Esophagus muscularis mucosa (tissue), 4 donors: ENCODE measurements at regions of chr20 and their contacts with region 1.

Region 1: DNA sequence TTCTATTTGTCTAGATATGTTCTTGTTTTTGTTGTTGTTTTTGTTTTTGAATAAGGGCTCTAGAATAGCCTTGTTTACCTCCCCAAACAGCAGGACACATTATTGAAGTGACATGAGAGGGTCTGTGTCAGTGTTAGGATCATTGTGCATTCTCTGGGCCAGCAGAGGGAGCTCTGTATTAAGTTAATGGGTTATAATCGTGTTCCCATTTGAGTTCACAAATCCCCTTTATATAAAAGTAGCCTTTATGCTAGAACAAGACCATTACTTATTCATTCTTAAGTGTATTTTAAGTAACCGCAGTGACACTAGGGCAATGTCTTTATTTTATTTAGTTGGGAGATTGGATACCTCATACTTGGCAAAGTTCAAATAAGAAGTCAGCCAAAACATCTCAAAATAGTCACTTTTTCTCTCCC is 44.8 kb downstream of the STK4 start:
- DNase-seq: no peak
- H3K4me3 ChIP-seq: no peak overlapping the region
- H3K27ac ChIP-seq: no peak overlapping the region
- H3K4me1 ChIP-seq: peaks cover 0 to 22% (median 13%) of the 10 kb centered on the region in 4 donors
- H3K27me3 ChIP-seq: no peaks in the 10 kb centered on the region
- CTCF ChIP-seq: peak; percentile 64 to 77 (median 72)
- EP300 ChIP-seq: no peak
- POLR2A ChIP-seq: no peak

Region 2: DNA sequence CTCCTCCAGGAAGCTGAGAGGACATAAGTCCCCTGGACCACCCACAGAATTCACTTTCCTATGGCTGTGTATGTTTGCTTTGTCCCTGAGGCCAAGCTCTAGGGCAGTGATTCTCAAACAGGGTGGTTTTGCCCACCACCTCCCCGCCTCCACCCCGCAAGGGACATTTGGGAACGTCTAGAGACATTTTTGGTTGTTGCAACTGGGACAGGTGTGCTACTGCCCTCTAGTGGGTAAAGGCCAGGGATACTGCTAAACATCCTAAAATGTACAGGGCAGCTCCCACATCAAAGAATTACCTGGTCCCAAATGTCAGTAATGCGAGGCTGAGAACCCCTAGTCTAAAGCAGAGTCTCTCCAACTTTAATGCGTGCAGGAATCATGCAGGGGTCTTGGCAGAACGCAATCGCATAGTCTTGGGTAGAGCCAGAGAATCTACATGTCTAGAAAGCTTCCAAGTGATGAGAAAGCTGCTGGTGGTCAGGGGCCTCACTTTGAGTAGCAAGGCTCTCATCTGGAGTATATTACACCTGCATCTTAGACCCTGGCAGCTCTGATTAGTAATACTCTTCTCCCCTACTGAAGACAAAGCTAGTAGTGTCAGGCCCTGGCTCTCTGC is 84.7 kb after region 1 on chr20:
- intact Hi-C with region 1: loop called (anchors 5 kb)
- DNase-seq: no peak
- H3K4me3 ChIP-seq: no peak overlapping the region
- H3K27ac ChIP-seq: no peak overlapping the region
- H3K4me1 ChIP-seq: peaks cover 6 to 28% (median 17%) of the 10 kb centered on the region in 4 donors
- H3K27me3 ChIP-seq: peaks cover 0 to 60% (median 29%) of the 10 kb centered on the region in 4 donors
- CTCF ChIP-seq: peak; percentile 52 to 79 (median 64)
- EP300 ChIP-seq: no peak
- POLR2A ChIP-seq: no peak